ENCODE measurements at regions of chr1 and their contacts with region 1.

Region 1: GRCh38 chr1:25099343-25099951 is 132.9 kb downstream of the SYF2 start:
- DNase-seq: no peak
- H3K4me3 ChIP-seq: no peak overlapping the region
- H3K27ac ChIP-seq: no peak overlapping the region
- H3K4me1 ChIP-seq: no peaks in the 10 kb centered on the region
- H3K27me3 ChIP-seq: no peaks in the 10 kb centered on the region; a peak in 1 of 7 replicates
- CTCF ChIP-seq: no peak
- EP300 ChIP-seq: no peak
- POLR2A ChIP-seq: no peak
- RAD21 ChIP-seq: no peak

Region 2: GRCh38 chr1:25028907-25029599 is 70.4 kb before region 1 on chr1:
- CTCF ChIA-PET with region 1: interaction called, 10 read pairs
- POLR2A ChIA-PET with region 1: no interaction called
- DNase-seq: no peak
- H3K4me3 ChIP-seq: no peak overlapping the region
- H3K27ac ChIP-seq: no peak overlapping the region
- H3K4me1 ChIP-seq: peaks cover 0 to 12% (median 5%) of the 10 kb centered on the region in 4 experiments; a peak in 5 of 7 replicates
- H3K27me3 ChIP-seq: no peaks in the 10 kb centered on the region
- CTCF ChIP-seq: no peak
- EP300 ChIP-seq: no peak
- POLR2A ChIP-seq: no peak
- RAD21 ChIP-seq: no peak

Region 3: DNA sequence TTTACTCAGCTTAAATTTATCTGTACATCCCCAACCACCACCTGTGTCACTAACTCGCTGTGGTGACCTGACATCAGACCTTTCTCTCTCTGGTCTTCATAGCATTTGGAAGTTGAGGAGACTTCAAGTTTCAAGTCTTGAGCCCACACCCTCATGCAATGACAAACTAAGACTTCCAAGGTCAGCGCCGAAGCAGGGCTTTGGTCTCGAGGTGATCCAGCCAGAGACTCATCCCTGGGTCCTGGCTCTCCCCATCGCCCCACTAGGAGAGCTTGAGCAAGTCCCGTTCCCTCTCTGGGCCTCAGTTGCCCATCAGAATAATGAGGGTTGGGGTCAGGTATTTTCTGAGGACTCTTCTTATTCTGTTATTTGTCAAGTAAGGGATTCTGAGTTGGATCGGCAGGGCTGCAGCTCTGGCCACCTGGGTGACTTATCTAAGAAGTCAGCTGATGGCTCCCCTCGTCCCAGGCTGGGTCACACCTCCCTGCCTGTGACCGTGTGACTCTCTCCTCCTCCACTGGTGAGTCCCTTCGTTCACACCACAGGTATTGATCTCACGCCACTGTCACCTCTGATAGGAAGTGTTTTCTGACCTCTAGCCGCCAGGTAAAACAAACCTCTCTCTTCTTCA is 25.7 kb before region 1 on chr1:
- CTCF ChIA-PET with region 1: interaction called, 30 read pairs
- POLR2A ChIA-PET with region 1: no interaction called
- DNase-seq: no peak
- H3K4me3 ChIP-seq: no peak overlapping the region
- H3K27ac ChIP-seq: no peak overlapping the region
- H3K4me1 ChIP-seq: no peaks in the 10 kb centered on the region
- H3K27me3 ChIP-seq: no peaks in the 10 kb centered on the region
- CTCF ChIP-seq: no peak
- EP300 ChIP-seq: no peak
- POLR2A ChIP-seq: no peak
- RAD21 ChIP-seq: no peak

Region 4: GRCh38 chr1:25082216-25082899 is 17.1 kb before region 1 on chr1:
- CTCF ChIA-PET with region 1: interaction called, 61 read pairs
- POLR2A ChIA-PET with region 1: no interaction called
- DNase-seq: no peak
- H3K4me3 ChIP-seq: no peak overlapping the region
- H3K27ac ChIP-seq: no peak overlapping the region
- H3K4me1 ChIP-seq: no peaks in the 10 kb centered on the region
- H3K27me3 ChIP-seq: no peaks in the 10 kb centered on the region
- CTCF ChIP-seq: no peak
- EP300 ChIP-seq: no peak
- POLR2A ChIP-seq: no peak
- RAD21 ChIP-seq: no peak

Region 5: GRCh38 chr1:25111706-25112105 is 12.3 kb after region 1 on chr1:
- CTCF ChIA-PET with region 1: interaction called, 15 read pairs
- POLR2A ChIA-PET with region 1: interaction called, 3 read pairs
- DNase-seq: no peak
- H3K4me3 ChIP-seq: no peak overlapping the region
- H3K27ac ChIP-seq: no peak overlapping the region
- H3K4me1 ChIP-seq: no peaks in the 10 kb centered on the region
- H3K27me3 ChIP-seq: no peaks in the 10 kb centered on the region
- CTCF ChIP-seq: no peak
- EP300 ChIP-seq: no peak
- POLR2A ChIP-seq: no peak
- RAD21 ChIP-seq: no peak

Region 6: GRCh38 chr1:25173809-25174335 is 74.4 kb after region 1 on chr1:
- CTCF ChIA-PET with region 1: no interaction called
- POLR2A ChIA-PET with region 1: no interaction called
- DNase-seq: peak in 1 of 2 experiments; percentile 7
- H3K4me3 ChIP-seq: no peak overlapping the region
- H3K27ac ChIP-seq: no peak overlapping the region
- H3K4me1 ChIP-seq: 0 out of 7 replicates have a peak, but pooled peaks cover 0 to 1% (median 0%) of the 10 kb centered on the region in 4 experiments
- H3K27me3 ChIP-seq: no peaks in the 10 kb centered on the region; a peak in 1 of 7 replicates
- CTCF ChIP-seq: no peak
- EP300 ChIP-seq: no peak
- POLR2A ChIP-seq: no peak
- RAD21 ChIP-seq: no peak

Measured in H1 (cell line).